CD8-positive, alpha-beta T cell (primary cell): ENCODE measurements at regions of chr17 and their contacts with region 1.

Region 1: GRCh38 chr17:27760069-27760885 is 40.1 kb downstream of the NOS2 start:
- DNase-seq: peak; percentile 51 to 82 (median 67)
- ATAC-seq: peak; percentile 61
- H3K4me3 ChIP-seq: no peak overlapping the region
- H3K4me3 Mint-ChIP-seq: no peak overlapping the region
- H3K27ac ChIP-seq: no peak overlapping the region
- H3K27ac Mint-ChIP-seq: no peak overlapping the region
- H3K4me1 ChIP-seq: no peaks in the 10 kb centered on the region
- H3K4me1 Mint-ChIP-seq: no peaks in the 10 kb centered on the region
- H3K27me3 ChIP-seq: no peaks in the 10 kb centered on the region
- H3K27me3 Mint-ChIP-seq: no peaks in the 10 kb centered on the region
- CTCF ChIP-seq: peak; percentile 84

Region 2: DNA sequence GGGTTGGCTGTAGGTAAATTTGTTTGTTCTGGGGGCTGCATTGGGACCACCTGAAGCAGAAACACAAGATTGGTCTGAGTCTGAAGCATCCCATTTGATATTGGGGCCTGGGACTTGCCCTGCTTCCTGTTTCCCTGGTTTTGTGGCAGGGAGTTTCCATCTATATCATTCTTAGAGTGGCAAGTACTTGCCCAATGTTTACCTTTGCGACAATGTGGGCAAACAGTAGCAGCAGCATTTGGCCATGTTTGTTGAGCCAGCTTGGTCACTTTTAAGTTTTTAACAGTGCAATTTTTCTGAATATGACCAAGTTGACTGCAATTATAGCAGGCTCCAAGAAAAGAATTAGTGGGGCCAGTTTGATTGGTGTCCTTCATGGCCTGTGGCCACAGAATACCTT is 67.5 kb before region 1 on chr17:
- CTCF ChIA-PET with region 1: no interaction called
- POLR2A ChIA-PET with region 1: no interaction called
- intact Hi-C with region 1: no loop called
- DNase-seq: no peak
- ATAC-seq: no peak
- H3K4me3 ChIP-seq: no peak overlapping the region
- H3K4me3 Mint-ChIP-seq: no peak overlapping the region
- H3K27ac ChIP-seq: no peak overlapping the region
- H3K27ac Mint-ChIP-seq: no peak overlapping the region
- H3K4me1 ChIP-seq: no peaks in the 10 kb centered on the region
- H3K4me1 Mint-ChIP-seq: no peaks in the 10 kb centered on the region
- H3K27me3 ChIP-seq: no peaks in the 10 kb centered on the region
- H3K27me3 Mint-ChIP-seq: peaks cover 8% of the 10 kb centered on the region
- CTCF ChIP-seq: no peak

Region 3: DNA sequence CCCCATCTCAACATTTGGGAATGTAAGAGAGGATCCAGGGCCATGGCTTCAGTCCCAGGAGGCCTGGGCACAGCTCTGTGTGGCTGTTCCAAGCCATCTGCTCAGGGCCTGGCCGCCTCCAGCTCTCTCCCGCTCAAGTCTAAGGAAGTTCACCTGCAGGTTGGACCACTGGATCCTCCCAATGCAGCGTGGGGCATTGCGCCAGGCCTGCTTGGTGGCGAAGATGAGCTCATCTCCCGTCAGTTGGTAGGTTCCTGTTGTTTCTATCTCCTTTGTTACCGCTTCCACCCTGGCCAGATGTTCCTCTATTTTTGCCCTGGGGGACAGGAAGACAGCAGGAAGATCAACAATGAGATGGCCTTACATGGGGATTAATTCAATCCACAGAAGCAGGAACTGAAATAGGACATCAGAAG is 22.5 kb after region 1 on chr17:
- CTCF ChIA-PET with region 1: interaction called, 15 read pairs
- POLR2A ChIA-PET with region 1: no interaction called
- intact Hi-C with region 1: no loop called
- DNase-seq: no peak
- ATAC-seq: no peak
- H3K4me3 ChIP-seq: no peak overlapping the region
- H3K4me3 Mint-ChIP-seq: no peak overlapping the region
- H3K27ac ChIP-seq: no peak overlapping the region
- H3K27ac Mint-ChIP-seq: no peak overlapping the region
- H3K4me1 ChIP-seq: no peaks in the 10 kb centered on the region
- H3K4me1 Mint-ChIP-seq: no peaks in the 10 kb centered on the region
- H3K27me3 ChIP-seq: no peaks in the 10 kb centered on the region
- H3K27me3 Mint-ChIP-seq: peaks cover 2% of the 10 kb centered on the region
- CTCF ChIP-seq: no peak

Region 4: DNA sequence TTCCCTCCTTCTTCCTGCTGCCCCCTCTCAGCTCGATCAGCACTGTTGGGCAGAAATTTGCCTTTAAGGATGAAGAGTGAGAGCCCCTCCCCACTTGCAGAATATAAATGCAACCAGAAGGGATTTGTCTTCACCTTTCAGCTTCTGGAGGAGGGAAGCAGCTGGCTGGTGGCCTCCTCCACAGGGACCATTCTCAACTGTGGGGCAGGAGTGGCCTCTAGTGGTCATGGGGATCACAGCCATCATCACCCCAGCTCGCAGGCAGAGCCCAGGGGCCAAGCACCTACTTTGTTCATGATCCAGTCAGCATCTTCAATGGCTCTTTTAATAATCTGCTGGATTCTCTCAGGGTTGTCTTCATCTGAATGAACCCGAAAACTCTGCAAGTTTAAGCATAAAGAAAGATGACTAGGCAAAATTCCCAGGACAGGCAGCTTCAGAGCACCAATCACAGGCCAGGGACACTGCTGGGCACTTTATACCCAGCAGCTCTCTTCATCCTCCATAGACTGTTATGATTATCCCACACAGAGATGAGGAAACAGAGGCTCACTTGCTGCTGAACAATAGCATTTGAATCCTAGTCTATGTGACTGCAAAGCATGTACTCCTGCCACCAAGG is 119.8 kb after region 1 on chr17:
- CTCF ChIA-PET with region 1: interaction called, 49 read pairs
- POLR2A ChIA-PET with region 1: no interaction called
- intact Hi-C with region 1: loop called in 1 of 2 experiments (anchors 1 kb)
- DNase-seq: peak; percentile 32 to 75 (median 61)
- ATAC-seq: peak; percentile 75
- H3K4me3 ChIP-seq: no peak overlapping the region
- H3K4me3 Mint-ChIP-seq: no peak overlapping the region
- H3K27ac ChIP-seq: no peak overlapping the region
- H3K27ac Mint-ChIP-seq: no peak overlapping the region
- H3K4me1 ChIP-seq: peaks cover 17% of the 10 kb centered on the region
- H3K4me1 Mint-ChIP-seq: peaks cover 19% of the 10 kb centered on the region
- H3K27me3 ChIP-seq: no peaks in the 10 kb centered on the region
- H3K27me3 Mint-ChIP-seq: no peaks in the 10 kb centered on the region
- CTCF ChIP-seq: peak; percentile 66

Region 5: GRCh38 chr17:28252436-28252835 is 492.2 kb after region 1 on chr17:
- CTCF ChIA-PET with region 1: interaction called, 7 read pairs
- POLR2A ChIA-PET with region 1: no interaction called
- intact Hi-C with region 1: loop called in 1 of 2 experiments (anchors 2 kb)
- DNase-seq: no peak
- ATAC-seq: no peak
- H3K4me3 ChIP-seq: no peak overlapping the region
- H3K4me3 Mint-ChIP-seq: no peak overlapping the region
- H3K27ac ChIP-seq: no peak overlapping the region
- H3K27ac Mint-ChIP-seq: no peak overlapping the region
- H3K4me1 ChIP-seq: peaks cover 4% of the 10 kb centered on the region
- H3K4me1 Mint-ChIP-seq: peaks cover 7% of the 10 kb centered on the region
- H3K27me3 ChIP-seq: peaks cover 0 to 5% of the 10 kb centered on the region in 2 experiments
- H3K27me3 Mint-ChIP-seq: peaks cover 33% of the 10 kb centered on the region
- CTCF ChIP-seq: no peak